GM12878 (cell line): ENCODE measurements at regions of chr6 and their contacts with region 1.

Region 1: GRCh38 chr6:116387374-116387773 is 16.6 kb downstream of the DSE start:
- DNase-seq: no peak
- ATAC-seq: peak; percentile 77
- H3K4me3 ChIP-seq: peak overlapping the region; percentile 59
- H3K27ac ChIP-seq: peak overlapping the region; percentile 79
- H3K4me1 ChIP-seq: peaks cover 59% of the 10 kb centered on the region
- H3K27me3 ChIP-seq: no peaks in the 10 kb centered on the region
- CTCF ChIP-seq: no peak
- EP300 ChIP-seq: peak in 1 of 2 experiments; percentile 64; a peak in 1 of 4 replicates
- POLR2A ChIP-seq: 0 out of 2 replicates have a peak, but pooled peaks have one; percentile 28
- RAD21 ChIP-seq: no peak

Region 2: DNA sequence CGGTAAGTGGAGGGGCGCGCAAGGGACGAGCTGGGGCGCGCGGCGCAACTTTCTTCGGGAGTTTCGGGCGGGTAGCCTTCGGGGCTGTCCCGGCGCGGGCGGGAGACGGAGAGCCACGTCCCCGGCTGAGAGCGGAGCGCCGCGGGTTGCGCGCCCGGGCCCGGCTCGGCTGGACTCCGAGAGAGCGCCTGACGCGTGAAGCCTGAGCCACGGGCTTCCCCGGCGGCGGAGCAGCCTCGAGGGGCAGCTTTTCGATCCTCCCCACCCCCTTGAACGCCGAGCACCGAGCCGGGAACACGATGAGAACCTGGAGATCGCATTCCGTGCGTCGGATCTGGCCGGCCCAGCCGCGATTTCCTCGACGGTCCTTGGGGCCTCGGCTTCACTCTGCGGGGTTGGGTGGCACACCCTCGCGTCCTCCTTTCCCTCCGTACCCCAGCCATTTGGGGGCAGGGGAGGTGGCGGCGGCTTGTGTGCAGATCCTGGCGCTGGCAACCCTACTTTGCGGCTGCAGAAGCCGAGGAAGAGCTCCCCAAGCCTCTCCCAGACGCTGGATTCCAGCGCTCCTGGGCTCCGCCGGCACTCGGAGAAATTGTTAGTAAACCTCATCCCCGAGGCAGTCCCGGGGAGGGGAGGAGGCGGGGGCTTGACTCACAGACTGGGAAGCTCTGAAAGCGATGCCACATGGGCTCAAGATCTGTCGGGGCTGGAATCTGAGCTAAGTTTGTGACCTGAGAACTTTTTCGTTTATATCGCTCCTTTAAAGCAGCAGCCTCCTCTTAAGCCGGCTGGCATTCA is 16.1 kb before region 1 on chr6:
- CTCF ChIA-PET with region 1: interaction called, 13 read pairs
- POLR2A ChIA-PET with region 1: interaction called, 10 read pairs
- RAD21 ChIA-PET with region 1: interaction called, 14 read pairs
- SMC1A ChIA-PET with region 1: interaction called, 92 read pairs
- in situ Hi-C with region 1: no loop called
- intact Hi-C with region 1: no loop called
- DNase-seq: no peak
- ATAC-seq: peak; percentile 73
- H3K4me3 ChIP-seq: peak overlapping the region; percentile 92
- H3K27ac ChIP-seq: peak overlapping the region; percentile 92
- H3K4me1 ChIP-seq: peaks cover 23% of the 10 kb centered on the region
- H3K27me3 ChIP-seq: no peaks in the 10 kb centered on the region
- CTCF ChIP-seq: no peak
- EP300 ChIP-seq: 0 out of 4 replicates have a peak, but pooled peaks of 1 of the 2 experiments have one; percentile 34
- POLR2A ChIP-seq: peak; percentile 37; the same call in 1 of the 2 replicates
- RAD21 ChIP-seq: no peak

Region 3: GRCh38 chr6:116405138-116405537 is 17.8 kb after region 1 on chr6:
- CTCF ChIA-PET with region 1: interaction called, 85 read pairs
- POLR2A ChIA-PET with region 1: interaction called, 43 read pairs
- RAD21 ChIA-PET with region 1: interaction called, 22 read pairs
- SMC1A ChIA-PET with region 1: interaction called, 101 read pairs
- in situ Hi-C with region 1: no loop called
- intact Hi-C with region 1: loop called (anchors 2 kb)
- DNase-seq: peak; percentile 82
- ATAC-seq: peak; percentile 67
- H3K4me3 ChIP-seq: peak overlapping the region; percentile 46; the same call in 1 of the 2 replicates
- H3K27ac ChIP-seq: peak overlapping the region; percentile 90
- H3K4me1 ChIP-seq: peaks cover 52% of the 10 kb centered on the region
- H3K27me3 ChIP-seq: no peaks in the 10 kb centered on the region
- CTCF ChIP-seq: no peak
- EP300 ChIP-seq: 0 out of 4 replicates have a peak, but pooled peaks have one; percentile 37 to 44
- POLR2A ChIP-seq: 0 out of 2 replicates have a peak, but pooled peaks have one; percentile 28
- RAD21 ChIP-seq: no peak

Region 4: GRCh38 chr6:116444092-116444491 is 56.7 kb after region 1 on chr6:
- CTCF ChIA-PET with region 1: interaction called, 3 read pairs
- POLR2A ChIA-PET with region 1: no interaction called
- RAD21 ChIA-PET with region 1: interaction called, 3 read pairs
- SMC1A ChIA-PET with region 1: interaction called, 10 read pairs
- in situ Hi-C with region 1: no loop called
- intact Hi-C with region 1: no loop called
- DNase-seq: no peak
- ATAC-seq: peak; percentile 87
- H3K4me3 ChIP-seq: no peak overlapping the region
- H3K27ac ChIP-seq: no peak overlapping the region
- H3K4me1 ChIP-seq: no peaks in the 10 kb centered on the region
- H3K27me3 ChIP-seq: no peaks in the 10 kb centered on the region
- CTCF ChIP-seq: peak; percentile 59 to 68 (median 65)
- EP300 ChIP-seq: no peak
- POLR2A ChIP-seq: no peak
- RAD21 ChIP-seq: peak; percentile 59

Region 5: DNA sequence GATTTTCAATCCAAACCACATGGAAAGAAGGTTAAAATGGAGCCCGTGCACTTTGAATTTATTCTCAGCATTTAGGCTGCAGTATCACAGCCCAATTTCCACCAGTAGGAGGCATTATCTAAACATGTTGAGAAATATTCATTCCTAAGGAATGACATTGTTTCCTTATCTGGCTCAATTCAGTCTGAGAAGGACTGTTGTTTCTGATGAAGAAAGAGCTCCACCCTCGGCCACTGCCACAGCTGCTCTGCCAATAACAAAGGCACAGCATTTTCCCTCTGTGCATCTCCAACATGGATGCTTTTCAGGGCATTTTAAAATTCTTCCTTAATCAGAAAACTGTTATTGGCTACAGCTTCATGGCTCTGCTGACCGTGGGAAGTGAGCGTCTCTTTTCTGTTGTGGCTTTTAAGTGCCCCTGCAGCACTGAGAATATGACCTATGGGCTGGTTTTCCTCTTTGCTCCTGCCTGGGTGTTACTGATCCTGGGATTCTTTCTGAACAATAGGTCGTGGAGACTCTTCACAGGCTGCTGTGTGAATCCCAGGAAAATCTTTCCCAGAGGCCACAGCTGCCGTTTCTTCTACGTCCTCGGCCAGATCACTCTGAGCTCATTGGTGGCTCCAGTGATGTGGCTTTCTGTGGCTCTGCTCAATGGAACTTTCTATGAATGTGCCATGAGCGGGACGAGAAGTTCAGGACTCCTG is 124.2 kb after region 1 on chr6 and contains the start of gene CALHM5:
- CTCF ChIA-PET with region 1: no interaction called
- POLR2A ChIA-PET with region 1: no interaction called
- RAD21 ChIA-PET with region 1: no interaction called
- SMC1A ChIA-PET with region 1: no interaction called
- in situ Hi-C with region 1: no loop called
- intact Hi-C with region 1: no loop called
- DNase-seq: no peak
- ATAC-seq: no peak
- H3K4me3 ChIP-seq: no peak within 1 kb of the TSS
- H3K27ac ChIP-seq: no peak within 1 kb of the TSS
- H3K4me1 ChIP-seq: peaks cover 9% of the 10 kb centered on the region
- H3K27me3 ChIP-seq: no peaks in the 10 kb centered on the region; a peak in 1 of 4 replicates
- CTCF ChIP-seq: peak in 1 of 3 experiments; percentile 24; a peak in 1 of 6 replicates
- EP300 ChIP-seq: no peak
- POLR2A ChIP-seq: no peak
- RAD21 ChIP-seq: 0 out of 2 replicates have a peak, but pooled peaks have one; percentile 2
- polyA plus RNA-seq, gene CALHM5: not detected

Region 6: GRCh38 chr6:116545661-116546060 is 158.3 kb after region 1 on chr6 and contains the start of gene TRAPPC3L:
- CTCF ChIA-PET with region 1: no interaction called
- POLR2A ChIA-PET with region 1: no interaction called
- RAD21 ChIA-PET with region 1: no interaction called
- SMC1A ChIA-PET with region 1: no interaction called
- in situ Hi-C with region 1: no loop called
- intact Hi-C with region 1: no loop called
- DNase-seq: no peak
- ATAC-seq: no peak
- H3K4me3 ChIP-seq: no peak within 1 kb of the TSS
- H3K27ac ChIP-seq: no peak within 1 kb of the TSS
- H3K4me1 ChIP-seq: no peaks in the 10 kb centered on the region
- H3K27me3 ChIP-seq: peaks cover 0 to 8% of the 10 kb centered on the region in 2 experiments; a peak in 1 of 4 replicates
- CTCF ChIP-seq: no peak
- EP300 ChIP-seq: no peak
- POLR2A ChIP-seq: no peak
- RAD21 ChIP-seq: no peak
- polyA plus RNA-seq, gene TRAPPC3L: not detected